ENCODE measurements at regions of chr9 and their contacts with region 1.

Region 1: DNA sequence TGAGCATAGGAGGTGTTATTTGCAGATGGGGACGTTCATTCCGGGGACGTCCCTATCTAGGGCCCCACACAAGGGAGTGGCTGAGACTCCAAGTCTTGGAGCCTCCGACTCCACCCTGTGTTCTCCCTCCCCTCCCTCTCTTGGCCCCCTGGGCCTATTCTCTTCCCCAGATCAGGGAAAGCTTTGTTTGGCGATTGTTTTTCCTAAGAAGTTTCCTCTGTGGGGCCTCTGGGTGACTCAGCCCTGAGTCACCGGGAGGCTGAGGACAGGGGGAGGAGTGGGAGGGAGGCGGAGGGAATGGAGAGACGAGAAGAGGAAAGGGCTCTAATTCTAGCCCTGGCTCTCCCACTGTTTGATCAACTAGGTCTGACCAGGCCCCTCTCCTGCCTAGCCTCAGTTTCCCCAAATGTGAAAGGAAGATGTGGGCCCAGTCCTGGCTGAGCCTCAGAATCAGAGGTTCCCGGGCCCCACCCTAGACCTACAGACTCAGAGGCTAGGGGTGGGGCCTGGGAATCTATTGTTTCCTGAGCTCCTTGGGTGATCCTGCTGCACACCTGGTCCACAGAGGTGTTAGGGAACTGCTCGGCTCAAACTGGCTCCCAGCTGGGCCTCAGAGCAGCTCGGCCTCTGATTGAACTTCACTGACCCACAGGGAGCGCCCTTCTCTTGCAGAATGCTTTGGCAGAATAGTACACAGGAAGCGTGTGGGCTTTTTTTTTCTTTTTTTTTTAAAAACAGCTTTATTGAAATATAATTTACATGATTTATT is 19.2 kb downstream of the GSN start:
- DNase-seq: peak; percentile 98
- H3K4me3 ChIP-seq: peak overlapping the region in 1 of 3 experiments; percentile 20
- H3K27ac ChIP-seq: peak overlapping the region; percentile 93
- H3K4me1 ChIP-seq: peaks cover 64% of the 10 kb centered on the region
- H3K27me3 ChIP-seq: no peaks in the 10 kb centered on the region
- CTCF ChIP-seq: peak; percentile 23 to 24
- POLR2A ChIP-seq: no peak

Region 2: DNA sequence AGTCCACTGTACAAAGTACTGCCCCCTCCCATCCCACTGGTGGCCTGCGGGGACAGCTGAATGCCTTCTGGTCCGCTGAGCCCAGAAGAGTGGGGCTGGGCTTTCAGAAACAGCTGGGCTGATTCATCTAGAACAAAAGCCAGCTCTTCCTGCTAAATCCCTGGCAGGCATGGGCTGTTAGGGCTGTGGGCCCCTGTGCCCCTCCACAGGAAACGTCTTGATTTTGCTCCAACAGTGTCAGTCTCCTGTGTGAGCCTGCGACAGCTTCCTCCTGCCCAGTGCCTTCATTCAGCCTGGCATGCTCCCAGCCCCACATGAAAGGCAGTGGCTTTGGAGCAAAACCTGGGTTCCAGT is 26.1 kb before region 1 on chr9:
- CTCF ChIA-PET with region 1: interaction called, 9 read pairs
- POLR2A ChIA-PET with region 1: interaction called, 5 read pairs
- dilution Hi-C with region 1: no loop called
- intact Hi-C with region 1: loop called (anchors 1 kb)
- DNase-seq: peak; percentile 63
- H3K4me3 ChIP-seq: no peak overlapping the region
- H3K27ac ChIP-seq: peak overlapping the region; percentile 13
- H3K4me1 ChIP-seq: peaks cover 17% of the 10 kb centered on the region
- H3K27me3 ChIP-seq: peaks cover 0 to 5% of the 10 kb centered on the region in 2 experiments
- CTCF ChIP-seq: no peak
- POLR2A ChIP-seq: no peak

Region 3: DNA sequence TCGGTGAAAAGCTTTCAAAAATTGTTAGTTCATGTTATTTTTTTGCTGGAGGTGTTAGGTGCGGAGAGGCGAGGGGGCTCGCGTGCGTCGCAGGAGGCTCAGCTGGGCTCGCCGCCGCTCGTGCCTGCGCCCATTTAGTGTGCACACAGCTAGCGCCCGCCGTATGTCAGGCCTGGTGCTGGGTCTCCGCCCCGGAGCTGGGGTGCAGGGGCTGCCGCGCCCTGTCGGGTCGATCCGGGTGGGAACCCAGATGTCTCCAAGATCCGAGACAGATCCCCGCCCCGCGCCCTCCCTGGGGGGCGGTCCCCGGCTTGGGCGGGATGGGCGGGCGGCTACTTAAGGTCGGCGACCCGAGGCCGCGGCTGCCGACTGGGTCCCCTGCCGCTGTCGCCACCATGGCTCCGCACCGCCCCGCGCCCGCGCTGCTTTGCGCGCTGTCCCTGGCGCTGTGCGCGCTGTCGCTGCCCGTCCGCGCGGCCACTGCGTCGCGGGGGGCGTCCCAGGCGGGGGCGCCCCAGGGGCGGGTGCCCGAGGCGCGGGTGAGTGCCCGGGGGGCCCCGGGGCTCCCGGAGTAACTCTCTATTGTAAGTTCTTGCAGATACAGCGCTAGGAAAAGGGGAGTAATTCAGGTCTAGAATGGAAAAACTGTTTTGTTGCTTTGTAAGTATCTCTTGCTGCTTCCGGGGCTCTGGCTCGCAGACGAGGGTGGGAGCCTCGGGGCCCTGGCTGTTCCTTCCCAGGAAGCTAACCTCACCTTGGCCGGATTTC is 12.5 kb after region 1 on chr9:
- CTCF ChIA-PET with region 1: interaction called, 33 read pairs
- POLR2A ChIA-PET with region 1: interaction called, 7 read pairs
- dilution Hi-C with region 1: no loop called
- intact Hi-C with region 1: loop called (anchors 1 kb)
- DNase-seq: peak; percentile 41
- H3K4me3 ChIP-seq: peak overlapping the region; percentile 41 to 52 (median 44)
- H3K27ac ChIP-seq: no peak overlapping the region
- H3K4me1 ChIP-seq: peaks cover 15% of the 10 kb centered on the region
- H3K27me3 ChIP-seq: no peaks in the 10 kb centered on the region
- CTCF ChIP-seq: no peak
- POLR2A ChIP-seq: peak; percentile 31

Region 4: GRCh38 chr9:121350993-121351561 is 63.9 kb after region 1 on chr9:
- CTCF ChIA-PET with region 1: no interaction called
- POLR2A ChIA-PET with region 1: no interaction called
- dilution Hi-C with region 1: no loop called
- intact Hi-C with region 1: loop called (anchors 1 kb)
- DNase-seq: peak; percentile 98
- H3K4me3 ChIP-seq: no peak overlapping the region
- H3K27ac ChIP-seq: peak overlapping the region; percentile 66
- H3K4me1 ChIP-seq: peaks cover 52% of the 10 kb centered on the region
- H3K27me3 ChIP-seq: no peaks in the 10 kb centered on the region
- CTCF ChIP-seq: no peak
- POLR2A ChIP-seq: no peak

Region 5: GRCh38 chr9:122827761-122828093 is 1540.6 kb after region 1 on chr9:
- CTCF ChIA-PET with region 1: no interaction called
- POLR2A ChIA-PET with region 1: no interaction called
- dilution Hi-C with region 1: no loop called
- intact Hi-C with region 1: loop called (anchors 10 kb)
- DNase-seq: no peak
- H3K4me3 ChIP-seq: peak overlapping the region; percentile 50 to 84 (median 57)
- H3K27ac ChIP-seq: peak overlapping the region; percentile 84
- H3K4me1 ChIP-seq: peaks cover 17% of the 10 kb centered on the region
- H3K27me3 ChIP-seq: no peaks in the 10 kb centered on the region
- CTCF ChIP-seq: no peak
- POLR2A ChIP-seq: no peak